ENCODE measurements at regions of chr1 and their contacts with region 1.

Region 1: DNA sequence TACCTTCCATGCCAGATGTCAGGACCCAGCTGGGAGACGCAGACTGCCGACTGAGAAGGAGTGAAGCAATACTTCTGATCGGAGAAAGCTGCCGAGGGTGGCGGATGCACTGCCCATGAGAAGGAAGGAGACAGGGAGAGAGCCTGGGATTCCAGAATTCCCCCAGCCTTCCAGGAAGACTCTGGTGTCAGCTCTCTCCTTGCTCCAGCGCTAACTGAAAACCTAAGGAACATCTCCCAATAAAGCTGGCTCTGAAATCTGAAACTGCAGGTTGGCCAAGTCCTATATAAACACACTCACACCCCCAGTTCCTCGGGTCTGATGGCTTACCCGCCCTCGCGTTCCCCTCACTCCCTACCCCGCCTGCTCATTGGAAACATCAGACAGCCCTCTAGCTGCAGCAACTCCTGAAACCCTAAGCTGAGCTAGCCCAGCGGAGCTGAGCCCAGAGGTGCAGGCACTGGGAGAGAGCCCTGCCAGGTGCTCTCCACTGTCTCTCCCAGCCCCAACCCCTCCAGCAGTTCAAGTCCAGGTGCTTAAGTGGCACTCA is 52.3 kb downstream of the PLEKHA6 start:
- DNase-seq: no peak
- ATAC-seq: peak; percentile 51 to 54
- H3K4me3 ChIP-seq: peak overlapping the region in 2 of 4 donors; percentile 20 to 25
- H3K27ac ChIP-seq: peak overlapping the region in 2 of 4 donors; percentile 7 to 27
- H3K4me1 ChIP-seq: peaks cover 0 to 5% of the 10 kb centered on the region in 2 donors
- H3K27me3 ChIP-seq: peaks cover 6 to 19% (median 13%) of the 10 kb centered on the region in 3 donors
- CTCF ChIP-seq: no peak
- POLR2A ChIP-seq: no peak

Region 2: GRCh38 chr1:204149635-204150565 is 157.5 kb before region 1 on chr1:
- in situ Hi-C with region 1: no loop called
- intact Hi-C with region 1: no loop called
- DNase-seq: peak in 1 of 2 donors; percentile 32
- ATAC-seq: peak; percentile 20 to 38
- H3K4me3 ChIP-seq: no peak overlapping the region
- H3K27ac ChIP-seq: peak overlapping the region in 3 of 4 donors; percentile 26 to 67 (median 41)
- H3K4me1 ChIP-seq: peaks cover 5 to 7% of the 10 kb centered on the region in 2 donors
- H3K27me3 ChIP-seq: peaks cover 7 to 28% (median 20%) of the 10 kb centered on the region in 3 donors
- CTCF ChIP-seq: no peak
- POLR2A ChIP-seq: no peak

Region 3: DNA sequence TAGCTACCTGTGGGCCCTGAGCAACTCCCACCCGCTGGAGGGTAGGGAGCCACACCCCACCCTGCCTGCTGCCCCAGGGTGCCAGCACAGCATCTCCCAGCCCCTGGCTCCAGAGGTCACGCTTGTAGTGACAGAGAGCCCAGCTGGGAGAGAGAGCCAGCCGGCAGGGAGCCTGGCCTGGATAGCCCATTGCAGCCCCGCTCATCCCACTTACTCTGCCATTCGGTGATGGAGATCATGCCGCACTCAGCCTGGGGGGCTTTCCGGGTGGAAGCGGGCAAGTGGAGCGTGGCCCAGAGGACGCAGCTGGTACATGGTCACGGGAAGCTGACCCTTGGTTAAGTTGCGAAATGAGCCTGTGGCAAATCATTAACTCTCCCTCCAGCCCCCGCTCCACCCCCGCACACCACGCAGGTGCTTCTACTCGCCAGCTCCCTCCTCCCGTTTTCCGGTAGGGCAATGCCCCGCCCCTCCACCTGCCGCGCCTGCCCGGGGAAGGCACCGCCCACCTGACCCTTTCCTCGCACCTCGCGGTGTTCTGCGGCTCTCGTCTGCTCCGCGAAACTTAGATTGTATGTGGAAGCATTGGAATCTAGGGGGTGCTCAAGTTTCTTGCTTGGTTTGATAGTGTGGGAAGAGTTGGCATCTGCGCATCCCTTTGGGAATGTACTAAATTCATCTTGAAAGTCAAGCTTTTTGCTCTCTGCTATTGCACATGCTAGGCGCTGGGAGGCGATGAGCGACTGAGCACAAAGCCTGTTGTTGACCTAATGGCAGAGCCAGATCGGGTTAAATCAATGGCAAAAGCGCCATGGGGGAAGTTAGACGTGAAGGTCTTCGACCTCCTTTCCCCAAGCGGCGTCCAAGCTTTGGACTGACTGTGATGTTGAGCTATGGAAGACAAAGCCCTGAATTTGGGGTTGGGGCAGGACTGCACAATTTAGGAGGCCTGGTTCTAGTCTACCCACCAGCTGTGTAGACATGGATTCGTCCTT is 93.4 kb before region 1 on chr1 and contains the start of gene GOLT1A:
- in situ Hi-C with region 1: no loop called
- intact Hi-C with region 1: loop called (anchors 5 kb)
- DNase-seq: peak; percentile 28 to 34
- ATAC-seq: peak; percentile 56 to 62
- H3K4me3 ChIP-seq: peak within 1 kb of the TSS in 3 of 4 donors; percentile 15 to 47 (median 40)
- H3K27ac ChIP-seq: no peak within 1 kb of the TSS
- H3K4me1 ChIP-seq: peaks cover 0 to 6% of the 10 kb centered on the region in 2 donors
- H3K27me3 ChIP-seq: peaks cover 5 to 13% (median 8%) of the 10 kb centered on the region in 3 donors
- CTCF ChIP-seq: peak; percentile 14 to 59 (median 53)
- POLR2A ChIP-seq: no peak
- total RNA-seq, gene GOLT1A: 1.1 to 1.3 TPM in 2 of 4 donors, not detected in the others